HepG2 (cell line): ENCODE measurements at regions of chr2 and their contacts with region 1.

Region 1: DNA sequence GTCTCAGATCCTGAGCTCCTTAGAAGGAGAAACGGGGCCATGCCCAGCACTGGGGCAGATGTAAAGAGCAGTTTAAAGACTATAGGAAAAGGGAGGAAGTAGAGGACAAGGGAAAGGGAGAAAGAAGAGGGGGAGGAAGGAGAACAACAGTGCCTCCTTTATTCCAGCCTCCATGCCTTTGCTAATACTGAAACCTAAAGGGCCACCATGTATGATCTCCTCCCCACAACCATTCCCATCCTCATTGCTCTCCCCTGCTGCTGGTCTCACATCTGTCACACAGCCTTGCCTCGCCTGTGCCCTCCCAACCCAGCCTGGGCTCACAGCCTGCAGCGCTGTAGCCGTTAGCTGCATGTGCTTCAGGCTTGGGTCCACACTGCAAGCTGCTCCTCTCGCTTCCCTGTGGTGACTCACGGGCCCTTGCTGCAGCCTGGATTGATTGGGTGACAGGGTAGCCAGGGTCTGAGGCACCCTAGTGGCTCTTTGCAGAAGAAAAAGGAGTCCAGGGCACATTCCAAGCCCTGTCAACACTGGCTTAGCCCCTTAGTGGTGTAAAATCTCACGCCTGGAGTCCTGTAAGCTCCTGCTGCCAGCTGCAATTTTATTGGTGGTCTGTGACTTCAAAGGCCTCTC is 281.9 kb downstream of the SRBD1 start:
- DNase-seq: peak; percentile 67
- ATAC-seq: peak; percentile 92
- H3K4me3 ChIP-seq: no peak overlapping the region
- H3K27ac ChIP-seq: no peak overlapping the region
- H3K4me1 ChIP-seq: peaks cover 49% of the 10 kb centered on the region
- H3K27me3 ChIP-seq: peaks cover 4 to 51% of the 10 kb centered on the region in 2 experiments; a peak in 4 of 5 replicates
- CTCF ChIP-seq: peak; percentile 60
- EP300 ChIP-seq: no peak
- POLR2A ChIP-seq: no peak
- RAD21 ChIP-seq: peak; percentile 60

Region 2: GRCh38 chr2:45237850-45238542 is 91.2 kb before region 1 on chr2:
- CTCF ChIA-PET with region 1: no interaction called
- POLR2A ChIA-PET with region 1: interaction called, 5 read pairs
- in situ Hi-C with region 1: no loop called
- intact Hi-C with region 1: loop called (anchors 1 kb)
- DNase-seq: peak; percentile 83
- ATAC-seq: peak; percentile 96
- H3K4me3 ChIP-seq: no peak overlapping the region
- H3K27ac ChIP-seq: no peak overlapping the region
- H3K4me1 ChIP-seq: peaks cover 18% of the 10 kb centered on the region
- H3K27me3 ChIP-seq: no peaks in the 10 kb centered on the region; a peak in 2 of 5 replicates
- CTCF ChIP-seq: no peak
- EP300 ChIP-seq: peak in 1 of 2 experiments; percentile 57; a peak in 1 of 4 replicates
- POLR2A ChIP-seq: no peak
- RAD21 ChIP-seq: 0 out of 2 replicates have a peak, but pooled peaks have one; percentile 21

Region 3: DNA sequence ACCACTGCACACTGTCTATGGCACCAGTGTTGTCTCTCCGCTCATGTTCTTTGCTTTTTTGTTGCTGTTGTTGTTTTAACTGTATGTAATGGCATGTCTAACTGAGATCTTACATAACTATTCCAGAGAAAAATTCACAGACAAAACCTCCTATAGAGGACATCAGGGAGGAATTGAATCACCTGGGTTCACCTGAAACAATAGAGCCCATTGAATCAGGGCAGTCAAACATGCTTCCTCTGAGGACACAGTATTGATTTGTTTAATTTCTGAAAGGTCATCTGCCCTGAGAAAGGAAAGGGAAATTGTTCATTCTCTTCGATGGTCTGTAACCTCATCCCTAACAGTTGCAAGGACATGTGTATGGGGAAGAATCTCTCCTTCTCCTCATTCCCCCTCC is 44.4 kb after region 1 on chr2:
- CTCF ChIA-PET with region 1: no interaction called
- POLR2A ChIA-PET with region 1: no interaction called
- in situ Hi-C with region 1: no loop called
- intact Hi-C with region 1: loop called (anchors 1 kb)
- DNase-seq: peak; percentile 93
- ATAC-seq: peak; percentile 97
- H3K4me3 ChIP-seq: no peak overlapping the region
- H3K27ac ChIP-seq: no peak overlapping the region
- H3K4me1 ChIP-seq: peaks cover 16% of the 10 kb centered on the region
- H3K27me3 ChIP-seq: no peaks in the 10 kb centered on the region
- CTCF ChIP-seq: no peak
- EP300 ChIP-seq: peak; percentile 71 to 79; a peak in 3 of 4 replicates
- POLR2A ChIP-seq: no peak
- RAD21 ChIP-seq: no peak